ENCODE measurements at regions of chr19 and their contacts with region 1.

Region 1: DNA sequence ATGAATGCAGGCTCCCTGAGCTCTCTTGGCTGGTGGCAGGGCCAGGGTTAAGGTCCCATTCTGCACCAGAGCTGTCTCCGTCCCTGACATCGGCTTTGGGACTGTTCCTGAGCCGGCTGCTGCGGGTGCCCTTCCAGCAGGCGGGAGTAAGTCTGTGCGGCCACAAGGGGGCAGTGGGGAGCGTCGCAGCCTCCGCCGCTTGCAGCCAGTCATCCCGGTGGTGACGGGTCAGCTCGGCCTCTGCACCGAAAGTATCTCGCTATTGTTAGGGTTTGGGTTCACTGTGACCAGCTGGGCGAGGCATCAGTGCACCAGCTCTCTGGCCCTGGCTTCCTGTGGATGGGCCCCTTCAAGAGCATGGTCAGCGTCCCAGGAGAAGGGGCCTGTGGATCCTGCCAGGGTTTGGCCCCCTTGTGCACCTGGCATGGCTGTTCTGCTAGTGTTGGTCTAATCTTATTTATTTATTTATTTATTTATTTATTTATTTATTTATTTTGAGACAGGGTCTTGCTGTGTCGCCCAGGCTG is 15.1 kb downstream of the NDUFB7 start:
- DNase-seq: peak; percentile 53
- H3K4me3 ChIP-seq: peak overlapping the region; percentile 31
- H3K27ac ChIP-seq: peak overlapping the region; percentile 39
- H3K27me3 ChIP-seq: no peaks in the 10 kb centered on the region
- CTCF ChIP-seq: peak; percentile 99

Region 2: GRCh38 chr19:14487370-14488125 is 69.2 kb before region 1 on chr19:
- CTCF ChIA-PET with region 1: no interaction called
- POLR2A ChIA-PET with region 1: no interaction called
- DNase-seq: no peak
- H3K4me3 ChIP-seq: no peak overlapping the region
- H3K27ac ChIP-seq: no peak overlapping the region
- H3K27me3 ChIP-seq: no peaks in the 10 kb centered on the region
- CTCF ChIP-seq: no peak

Region 3: GRCh38 chr19:14536926-14537692 is 19.6 kb before region 1 on chr19:
- CTCF ChIA-PET with region 1: interaction called, 17 read pairs
- POLR2A ChIA-PET with region 1: interaction called, 4 read pairs
- DNase-seq: no peak
- H3K4me3 ChIP-seq: no peak overlapping the region
- H3K27ac ChIP-seq: no peak overlapping the region
- H3K27me3 ChIP-seq: no peaks in the 10 kb centered on the region
- CTCF ChIP-seq: no peak

Region 4: DNA sequence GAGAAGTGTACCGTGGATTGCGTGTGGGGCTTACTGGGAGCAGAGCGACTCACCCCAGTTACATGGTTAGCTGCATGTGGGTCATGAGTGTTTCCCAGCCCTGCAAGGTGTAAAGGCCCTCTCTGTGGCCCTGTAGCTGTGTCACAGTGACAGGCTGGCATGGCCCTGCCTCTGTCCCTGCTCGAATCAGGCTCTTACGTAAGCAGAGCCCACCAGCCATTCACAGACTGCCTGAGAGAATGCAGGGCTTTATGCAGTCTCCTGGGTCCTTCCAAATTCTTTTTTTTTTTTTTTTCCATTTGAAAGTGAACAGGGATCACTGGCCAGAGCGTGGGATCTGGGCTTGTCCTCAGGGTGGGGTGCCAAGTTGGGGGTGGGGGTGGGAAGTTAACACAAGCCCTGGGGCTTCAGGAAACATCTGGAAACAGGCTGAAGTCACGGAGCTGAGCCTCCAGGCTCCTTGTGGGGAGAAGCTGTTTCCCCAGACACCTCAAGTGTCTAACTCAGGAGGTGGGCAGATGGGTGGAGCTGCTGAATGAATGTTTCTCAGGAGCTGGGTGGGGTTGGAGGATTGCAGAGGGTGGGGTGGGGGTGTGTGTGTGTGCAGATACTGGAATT is 13.9 kb before region 1 on chr19:
- CTCF ChIA-PET with region 1: interaction called, 32 read pairs
- POLR2A ChIA-PET with region 1: interaction called, 4 read pairs
- DNase-seq: no peak
- H3K4me3 ChIP-seq: no peak overlapping the region
- H3K27ac ChIP-seq: no peak overlapping the region
- H3K27me3 ChIP-seq: no peaks in the 10 kb centered on the region
- CTCF ChIP-seq: no peak

Region 5: DNA sequence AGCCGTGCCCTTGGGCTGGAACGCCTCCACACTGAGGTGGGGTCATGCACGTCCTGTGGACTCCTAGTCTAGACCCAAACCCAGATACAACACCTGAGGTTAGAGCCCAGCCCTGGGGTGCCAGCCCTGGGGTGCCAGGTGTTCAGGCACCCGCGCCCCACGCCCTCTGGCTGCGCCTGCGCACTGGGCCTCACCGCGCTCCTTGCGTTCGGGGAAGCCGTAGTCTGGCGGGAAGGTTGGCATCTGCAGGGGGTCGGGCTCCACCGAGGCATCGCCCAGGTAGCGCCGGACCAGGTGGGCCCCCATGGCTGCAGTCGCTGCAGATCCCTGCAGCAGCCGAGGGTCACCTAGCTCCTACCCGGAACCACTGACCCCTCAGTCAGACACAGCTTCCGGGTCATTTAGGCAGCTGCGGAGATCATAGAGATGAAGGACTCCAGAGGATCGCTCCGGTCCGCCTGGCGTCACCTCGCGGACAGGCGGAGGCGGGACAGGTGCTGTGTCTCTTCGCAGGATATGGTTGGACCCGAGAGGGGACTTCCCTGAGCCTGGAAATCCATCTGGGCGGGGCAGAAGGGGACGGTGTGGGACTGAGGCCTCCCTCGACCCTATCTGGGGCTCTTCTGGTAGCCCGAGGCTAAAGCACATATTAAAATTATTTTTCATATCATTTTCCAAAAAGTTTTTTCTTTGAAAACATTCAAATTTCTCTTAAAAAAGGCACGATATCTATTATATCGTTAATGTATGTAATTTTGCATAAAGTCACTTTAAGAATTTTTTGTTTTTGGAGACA is 15.2 kb after region 1 on chr19 and contains the start of gene NDUFB7:
- CTCF ChIA-PET with region 1: interaction called, 69 read pairs
- POLR2A ChIA-PET with region 1: interaction called, 3 read pairs
- DNase-seq: peak; percentile 78
- H3K4me3 ChIP-seq: peak within 1 kb of the TSS; percentile 99
- H3K27ac ChIP-seq: no peak within 1 kb of the TSS
- H3K27me3 ChIP-seq: no peaks in the 10 kb centered on the region
- CTCF ChIP-seq: peak; percentile 64
- polyA plus RNA-seq, gene NDUFB7: 97.3 and 164 TPM in 2 replicates

Measured in AG04450 (cell line).